ENCODE measurements at regions of chr11 and their contacts with region 1.

Region 1: GRCh38 chr11:74449369-74449931 is 17.9 kb downstream of the KCNE3 start:
- DNase-seq: peak; percentile 56
- H3K4me3 ChIP-seq: no peak overlapping the region; a peak in 1 of 4 replicates
- H3K27ac ChIP-seq: no peak overlapping the region
- H3K4me1 ChIP-seq: peaks cover 0 to 17% of the 10 kb centered on the region in 2 experiments; a peak in 3 of 4 replicates
- H3K27me3 ChIP-seq: no peaks in the 10 kb centered on the region
- CTCF ChIP-seq: peak; percentile 77
- EP300 ChIP-seq: no peak
- RAD21 ChIP-seq: peak; percentile 98

Region 2: GRCh38 chr11:73965076-73965860 is 484.2 kb before region 1 on chr11:
- CTCF ChIA-PET with region 1: interaction called, 17 read pairs
- POLR2A ChIA-PET with region 1: no interaction called
- DNase-seq: no peak
- H3K4me3 ChIP-seq: no peak overlapping the region
- H3K27ac ChIP-seq: no peak overlapping the region
- H3K4me1 ChIP-seq: peaks cover 5 to 8% of the 10 kb centered on the region in 2 experiments; a peak in 2 of 4 replicates
- H3K27me3 ChIP-seq: no peaks in the 10 kb centered on the region
- CTCF ChIP-seq: no peak
- EP300 ChIP-seq: no peak
- RAD21 ChIP-seq: no peak

Region 3: GRCh38 chr11:74269161-74269811 is 180.2 kb before region 1 on chr11:
- CTCF ChIA-PET with region 1: interaction called, 12 read pairs
- POLR2A ChIA-PET with region 1: no interaction called
- DNase-seq: no peak
- H3K4me3 ChIP-seq: no peak overlapping the region
- H3K27ac ChIP-seq: no peak overlapping the region
- H3K4me1 ChIP-seq: no peaks in the 10 kb centered on the region
- H3K27me3 ChIP-seq: no peaks in the 10 kb centered on the region
- CTCF ChIP-seq: no peak
- EP300 ChIP-seq: no peak
- RAD21 ChIP-seq: no peak

Region 4: DNA sequence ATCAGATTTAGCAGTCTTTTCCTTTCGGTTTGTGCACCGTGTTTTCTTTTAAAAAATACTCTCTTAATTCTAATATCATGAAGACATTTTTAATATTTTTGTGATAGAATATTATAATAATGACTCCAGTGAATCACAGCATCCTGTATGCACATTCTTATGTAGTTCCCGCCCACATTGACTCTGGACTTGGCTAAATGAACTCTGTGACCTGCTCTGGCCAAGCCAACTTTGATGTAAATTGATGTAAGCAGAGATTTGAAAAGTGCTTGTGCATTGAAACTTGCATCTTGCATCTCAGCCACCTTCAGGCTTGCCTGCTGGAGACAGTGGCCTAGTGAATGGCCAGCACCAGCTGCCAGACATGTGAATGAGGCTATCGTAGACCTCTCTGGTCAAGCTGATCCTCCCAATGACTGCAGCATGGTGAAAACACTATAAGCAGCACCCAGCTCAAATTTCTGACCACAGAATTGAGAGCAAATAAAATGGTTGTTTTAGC is 22.0 kb before region 1 on chr11:
- CTCF ChIA-PET with region 1: no interaction called
- POLR2A ChIA-PET with region 1: no interaction called
- DNase-seq: no peak
- H3K4me3 ChIP-seq: no peak overlapping the region
- H3K27ac ChIP-seq: no peak overlapping the region
- H3K4me1 ChIP-seq: no peaks in the 10 kb centered on the region
- H3K27me3 ChIP-seq: no peaks in the 10 kb centered on the region
- CTCF ChIP-seq: no peak
- EP300 ChIP-seq: no peak
- RAD21 ChIP-seq: no peak

Region 5: DNA sequence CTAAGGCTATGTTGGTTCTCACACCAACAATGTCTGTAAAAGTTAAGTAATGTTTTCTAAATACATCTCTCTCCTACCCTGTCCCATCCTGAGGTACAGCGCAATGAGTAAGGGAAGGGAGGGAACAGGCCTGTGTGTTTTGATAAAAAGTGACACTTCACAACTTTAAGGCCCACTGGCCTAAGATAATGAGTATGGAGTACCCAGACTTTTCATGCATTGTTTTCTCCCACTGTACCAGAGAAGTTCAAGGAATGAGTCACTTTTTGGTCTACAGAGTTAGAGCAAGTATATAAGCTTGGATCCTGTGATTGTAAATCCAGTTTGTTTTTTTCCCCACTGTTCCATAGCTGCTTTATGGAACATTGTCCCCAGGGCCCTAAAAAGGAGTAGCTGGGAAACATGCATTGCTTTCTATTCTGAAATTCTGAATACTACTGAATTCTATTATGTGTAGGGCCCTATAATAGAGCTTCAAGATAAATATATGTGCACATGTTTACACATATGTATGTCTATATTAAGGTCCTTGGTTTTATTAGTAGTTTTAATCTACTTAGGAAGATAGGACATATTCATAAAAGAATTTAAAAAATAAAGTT is 11.9 kb before region 1 on chr11:
- CTCF ChIA-PET with region 1: interaction called, 12 read pairs
- POLR2A ChIA-PET with region 1: no interaction called
- DNase-seq: no peak
- H3K4me3 ChIP-seq: no peak overlapping the region
- H3K27ac ChIP-seq: 0 out of 4 replicates have a peak overlapping the region, but pooled peaks of 1 of the 2 experiments have one; percentile 18
- H3K4me1 ChIP-seq: no peaks in the 10 kb centered on the region; a peak in 1 of 4 replicates
- H3K27me3 ChIP-seq: no peaks in the 10 kb centered on the region
- CTCF ChIP-seq: no peak
- EP300 ChIP-seq: no peak
- RAD21 ChIP-seq: no peak

Region 6: DNA sequence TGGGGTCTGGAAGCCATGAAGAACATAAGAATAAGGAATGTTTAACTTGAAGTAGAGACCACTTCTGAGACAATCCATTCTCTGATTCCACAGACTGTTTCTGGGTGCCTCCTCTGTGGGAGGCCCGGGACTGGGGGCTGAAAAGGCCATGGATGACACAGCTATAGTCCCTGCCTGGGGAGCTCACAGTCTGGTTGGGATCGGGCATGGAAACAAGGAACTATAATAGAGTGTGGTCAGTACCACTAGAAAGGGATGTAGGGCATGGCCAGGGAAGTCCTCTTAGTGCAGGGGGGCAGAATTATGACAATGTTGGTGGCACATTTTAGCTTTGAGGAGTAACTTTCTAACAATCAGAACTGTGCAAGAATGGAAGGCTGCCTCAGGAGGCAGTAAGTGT is 27.1 kb after region 1 on chr11:
- CTCF ChIA-PET with region 1: interaction called, 11 read pairs
- POLR2A ChIA-PET with region 1: no interaction called
- DNase-seq: no peak
- H3K4me3 ChIP-seq: no peak overlapping the region
- H3K27ac ChIP-seq: no peak overlapping the region
- H3K4me1 ChIP-seq: no peaks in the 10 kb centered on the region
- H3K27me3 ChIP-seq: peaks cover 6% of the 10 kb centered on the region; the same call in 1 of the 2 replicates
- CTCF ChIP-seq: no peak
- EP300 ChIP-seq: no peak
- RAD21 ChIP-seq: no peak

Region 7: DNA sequence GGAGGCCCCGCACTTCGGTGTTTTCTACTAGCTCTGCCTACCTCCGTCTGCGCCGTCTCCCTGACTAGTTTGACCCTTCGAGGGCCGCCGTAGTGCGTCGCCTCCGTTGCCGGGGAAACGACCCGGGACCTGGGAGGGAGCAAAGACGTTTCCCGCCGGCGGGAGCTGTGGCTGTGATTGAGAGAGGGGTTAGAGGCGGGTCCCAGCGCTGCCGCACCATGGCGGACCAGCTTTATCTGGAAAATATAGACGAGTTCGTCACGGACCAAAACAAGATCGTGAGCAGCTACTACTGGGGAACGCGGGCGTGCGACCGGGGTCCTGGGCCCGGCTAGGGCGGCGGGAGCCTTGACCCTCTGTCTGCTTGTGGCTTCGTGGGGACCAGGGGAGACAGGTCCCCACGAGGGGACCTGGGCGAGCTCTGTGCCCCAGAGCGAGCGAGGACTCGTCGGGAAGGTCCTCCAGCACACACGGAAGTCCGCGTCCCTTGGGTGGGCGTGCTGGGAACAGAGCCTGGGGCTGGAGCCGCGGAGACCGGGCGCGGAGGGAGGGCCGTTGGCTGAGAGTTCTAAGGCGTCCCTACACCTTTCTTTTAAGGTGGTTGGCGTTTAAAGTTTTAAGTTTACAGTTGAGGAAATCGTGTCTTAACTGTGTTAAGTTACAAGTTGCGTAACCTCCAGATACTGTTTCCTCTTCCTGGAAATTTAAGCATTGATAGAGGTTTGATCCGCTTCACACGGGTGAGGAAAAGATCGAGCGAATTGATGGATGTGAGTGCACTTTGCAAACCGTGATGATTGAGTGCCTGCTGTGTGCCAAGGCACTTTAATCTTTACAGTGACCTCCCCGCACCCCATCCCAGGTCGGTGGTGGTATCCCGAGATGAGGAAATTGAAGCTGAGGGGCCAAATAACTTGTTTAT is 143.3 kb after region 1 on chr11 and contains the start of gene POLD3:
- CTCF ChIA-PET with region 1: interaction called, 13 read pairs
- POLR2A ChIA-PET with region 1: no interaction called
- DNase-seq: peak; percentile 92
- H3K4me3 ChIP-seq: peak within 1 kb of the TSS; percentile 81 to 100
- H3K27ac ChIP-seq: peak within 1 kb of the TSS; percentile 78 to 79
- H3K4me1 ChIP-seq: no peaks in the 10 kb centered on the region; a peak in 2 of 4 replicates
- H3K27me3 ChIP-seq: no peaks in the 10 kb centered on the region
- CTCF ChIP-seq: no peak
- EP300 ChIP-seq: peak; percentile 6 to 26; a peak in 1 of 4 replicates
- RAD21 ChIP-seq: no peak
- polyA plus RNA-seq, gene POLD3: 7.9 and 9.5 TPM in 2 replicates

Measured in SK-N-SH (cell line).